Activated naive CD4-positive, alpha-beta T cell treated with anti-CD3 and anti-CD28 coated beads for 36 hours (primary cell): ENCODE measurements at regions of chrX and their contacts with region 1.

Region 1: DNA sequence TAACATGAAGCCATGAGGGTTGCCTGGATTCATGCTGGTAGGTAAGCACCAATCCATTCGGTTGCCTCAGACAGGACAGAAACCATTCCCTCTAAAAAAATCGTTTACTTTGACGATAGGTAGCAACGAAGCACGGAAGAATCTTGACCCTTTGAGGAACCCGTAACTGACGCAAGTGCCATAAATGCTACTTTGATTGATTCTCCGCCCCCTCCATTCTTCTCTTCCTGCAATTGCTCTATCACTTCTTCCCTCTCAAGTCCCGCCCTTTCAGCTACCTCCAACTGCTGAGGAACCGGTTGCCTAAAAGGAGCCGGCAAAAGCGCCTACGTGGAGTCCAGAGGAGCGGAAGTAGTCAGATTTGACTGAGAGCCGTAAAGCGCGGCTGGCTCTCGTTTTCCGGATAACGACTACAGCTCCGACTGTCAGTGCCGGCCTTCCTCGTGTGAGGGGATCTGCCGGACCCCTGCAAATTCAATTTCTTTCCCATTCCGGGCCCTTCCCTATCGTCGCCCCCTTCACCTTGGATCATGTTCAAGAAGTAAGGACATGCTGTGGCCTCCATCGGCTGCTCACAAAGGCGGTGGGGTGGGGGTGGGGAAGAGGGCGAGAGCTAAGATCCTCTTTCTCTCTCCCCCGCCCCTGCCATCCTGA is at the start of gene MCTS1:
- DNase-seq: peak; percentile 86
- H3K4me3 Mint-ChIP-seq: peak within 1 kb of the TSS; percentile 95
- H3K27ac Mint-ChIP-seq: peak within 1 kb of the TSS; percentile 98
- H3K4me1 Mint-ChIP-seq: peaks cover 7% of the 10 kb centered on the region
- H3K27me3 Mint-ChIP-seq: no peaks in the 10 kb centered on the region
- total RNA-seq, gene MCTS1: 58.6 to 63.4 TPM

Region 2: DNA sequence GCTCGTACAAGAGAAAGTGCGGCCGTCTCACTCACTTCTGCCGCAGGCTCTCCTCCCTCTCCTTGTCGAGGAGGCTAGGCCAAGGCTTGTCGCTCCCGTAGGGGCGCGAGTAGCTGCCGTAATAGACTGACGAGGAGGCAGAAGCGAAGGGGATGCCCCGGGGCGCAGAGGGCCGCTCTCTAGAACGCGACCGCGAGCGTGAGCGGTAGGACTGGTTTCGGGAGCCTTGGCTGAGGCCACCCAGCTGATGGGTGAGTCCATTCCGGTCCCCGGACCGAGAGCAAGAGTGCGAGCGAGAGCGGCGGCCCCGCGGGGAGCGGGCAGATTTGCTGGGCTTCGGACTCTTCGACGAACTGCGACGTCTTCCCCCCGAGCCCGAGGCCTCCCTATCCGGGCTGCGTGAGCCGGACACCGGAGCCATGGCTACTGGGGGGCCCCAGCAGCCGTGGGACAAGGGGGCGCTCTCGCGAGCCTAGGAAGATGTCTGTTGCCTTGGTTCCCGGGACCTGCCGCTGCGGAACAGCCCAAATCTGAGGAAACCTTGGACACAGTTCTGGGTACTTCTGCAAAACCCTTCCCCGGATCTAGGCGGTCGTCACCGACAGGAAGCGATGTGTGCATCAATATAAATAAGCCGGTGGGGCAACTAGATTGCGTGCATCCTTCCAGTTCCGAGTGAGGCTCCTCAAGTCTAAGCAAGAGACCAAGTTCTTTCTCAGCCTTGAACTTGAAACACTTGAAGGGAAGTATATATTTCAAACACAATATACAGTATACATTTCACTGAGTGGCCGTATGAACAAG is 660.4 kb before region 1 on chrX and contains the start of gene NKAP:
- CTCF ChIA-PET with region 1: no interaction called
- intact Hi-C with region 1: loop called (anchors 5 kb)
- DNase-seq: peak; percentile 86
- H3K4me3 Mint-ChIP-seq: peak within 1 kb of the TSS; percentile 98
- H3K27ac Mint-ChIP-seq: peak within 1 kb of the TSS; percentile 95
- H3K4me1 Mint-ChIP-seq: peaks cover 23% of the 10 kb centered on the region
- H3K27me3 Mint-ChIP-seq: no peaks in the 10 kb centered on the region
- total RNA-seq, gene NKAP: 12.3 to 12.7 TPM

Region 3: GRCh38 chrX:120549483-120550452 is 54.1 kb before region 1 on chrX:
- CTCF ChIA-PET with region 1: no interaction called
- intact Hi-C with region 1: loop called (anchors 2 kb)
- DNase-seq: peak; percentile 56
- H3K4me3 Mint-ChIP-seq: no peak overlapping the region
- H3K27ac Mint-ChIP-seq: peak overlapping the region; percentile 32
- H3K4me1 Mint-ChIP-seq: peaks cover 26% of the 10 kb centered on the region
- H3K27me3 Mint-ChIP-seq: no peaks in the 10 kb centered on the region